ENCODE measurements at regions of chr16 and their contacts with region 1.

Region 1: GRCh38 chr16:46830902-46831647 is at the start of gene C16orf87:
- DNase-seq: peak; percentile 96
- H3K4me3 ChIP-seq: peak within 1 kb of the TSS; percentile 76 to 93 (median 79)
- H3K27ac ChIP-seq: peak within 1 kb of the TSS; percentile 90 to 95 (median 94)
- H3K4me1 ChIP-seq: peaks cover 0 to 20% (median 14%) of the 10 kb centered on the region in 4 donors
- H3K27me3 ChIP-seq: no peaks in the 10 kb centered on the region
- CTCF ChIP-seq: no peak
- EP300 ChIP-seq: no peak
- POLR2A ChIP-seq: no peak
- total RNA-seq, gene C16orf87: 5.0 to 10.5 (median 8.7) TPM

Region 2: GRCh38 chr16:46466226-46466625 is 364.8 kb before region 1 on chr16:
- intact Hi-C with region 1: no loop called
- DNase-seq: no peak
- H3K4me3 ChIP-seq: no peak overlapping the region
- H3K27ac ChIP-seq: no peak overlapping the region
- H3K4me1 ChIP-seq: no peaks in the 10 kb centered on the region
- H3K27me3 ChIP-seq: no peaks in the 10 kb centered on the region
- CTCF ChIP-seq: no peak
- EP300 ChIP-seq: no peak
- POLR2A ChIP-seq: no peak

Region 3: GRCh38 chr16:46649928-46650623 is 181.0 kb before region 1 on chr16:
- intact Hi-C with region 1: no loop called
- DNase-seq: peak; percentile 81
- H3K4me3 ChIP-seq: peak overlapping the region in 3 of 4 donors; percentile 14 to 28 (median 21)
- H3K27ac ChIP-seq: peak overlapping the region; percentile 62 to 73 (median 68)
- H3K4me1 ChIP-seq: no peaks in the 10 kb centered on the region
- H3K27me3 ChIP-seq: no peaks in the 10 kb centered on the region
- CTCF ChIP-seq: no peak
- EP300 ChIP-seq: no peak
- POLR2A ChIP-seq: no peak

Region 4: GRCh38 chr16:46689365-46690280 is 141.5 kb before region 1 on chr16 and contains the start of gene ORC6:
- intact Hi-C with region 1: loop called (anchors 2 kb)
- DNase-seq: peak; percentile 99
- H3K4me3 ChIP-seq: peak within 1 kb of the TSS; percentile 85 to 97 (median 92)
- H3K27ac ChIP-seq: peak within 1 kb of the TSS; percentile 89 to 94 (median 94)
- H3K4me1 ChIP-seq: peaks cover 0 to 40% (median 35%) of the 10 kb centered on the region in 4 donors
- H3K27me3 ChIP-seq: no peaks in the 10 kb centered on the region
- CTCF ChIP-seq: no peak
- EP300 ChIP-seq: no peak
- POLR2A ChIP-seq: no peak
- total RNA-seq, gene ORC6: 0.33 to 2.5 (median 0.83) TPM

Region 5: GRCh38 chr16:46883690-46884512 is 52.8 kb after region 1 on chr16 and contains the start of gene GPT2:
- intact Hi-C with region 1: loop called (anchors 2 kb)
- DNase-seq: peak; percentile 97
- H3K4me3 ChIP-seq: peak within 1 kb of the TSS; percentile 54 to 87 (median 72)
- H3K27ac ChIP-seq: peak within 1 kb of the TSS; percentile 68 to 75 (median 70)
- H3K4me1 ChIP-seq: peaks cover 0 to 19% (median 15%) of the 10 kb centered on the region in 4 donors
- H3K27me3 ChIP-seq: peaks cover 0 to 12% (median 0%) of the 10 kb centered on the region in 3 donors
- CTCF ChIP-seq: no peak
- EP300 ChIP-seq: no peak
- POLR2A ChIP-seq: peak in 1 of 2 donors; percentile 14
- total RNA-seq, gene GPT2: 3.3 to 17.1 (median 10.7) TPM

Region 6: DNA sequence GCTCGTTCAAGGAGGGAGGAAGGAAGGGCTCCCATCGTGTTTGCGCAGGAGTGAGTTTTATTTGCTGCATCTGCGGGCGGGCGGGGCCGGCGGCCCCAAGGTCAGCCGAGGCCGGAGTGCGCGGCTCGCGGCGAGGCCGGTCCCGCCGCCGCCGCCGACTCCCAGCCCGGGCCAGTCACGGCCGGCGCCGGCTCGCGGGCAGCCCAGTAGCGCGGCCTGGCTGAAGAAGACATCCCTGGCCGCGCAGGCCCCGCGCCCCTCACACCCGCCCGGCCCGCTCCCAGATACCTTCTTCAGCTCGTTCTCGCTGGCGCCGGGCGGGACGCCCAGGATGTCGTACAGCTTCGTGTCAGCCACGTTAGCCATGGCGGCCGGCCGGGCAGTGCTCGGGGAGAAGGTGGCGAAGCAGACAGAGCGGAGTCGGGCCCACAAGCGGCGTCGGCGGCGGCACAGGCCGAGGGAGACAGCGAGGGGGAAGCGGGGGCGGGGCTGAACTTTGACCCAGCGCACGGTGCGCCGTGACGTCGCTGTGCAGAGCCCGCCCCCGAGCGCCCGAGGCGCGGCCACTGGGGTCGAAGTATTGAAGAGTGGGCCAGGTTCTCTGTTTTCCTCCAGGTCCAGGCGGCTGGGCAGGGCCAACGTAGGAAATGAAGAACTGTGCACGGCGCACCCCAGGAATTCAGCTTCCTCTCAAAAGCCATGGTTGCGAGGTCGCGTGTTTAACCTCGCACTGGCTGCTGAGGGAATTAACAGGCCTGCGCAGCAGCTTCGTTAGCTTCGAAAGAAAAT is 142.3 kb after region 1 on chr16 and contains the start of gene DNAJA2:
- intact Hi-C with region 1: loop called (anchors 2 kb)
- DNase-seq: peak; percentile 96
- H3K4me3 ChIP-seq: peak within 1 kb of the TSS; percentile 80 to 95 (median 90)
- H3K27ac ChIP-seq: peak within 1 kb of the TSS; percentile 95 to 99 (median 97)
- H3K4me1 ChIP-seq: peaks cover 0 to 40% (median 32%) of the 10 kb centered on the region in 4 donors
- H3K27me3 ChIP-seq: no peaks in the 10 kb centered on the region
- CTCF ChIP-seq: no peak
- EP300 ChIP-seq: peak in 1 of 4 donors; percentile 26
- POLR2A ChIP-seq: peak; percentile 85 to 86
- total RNA-seq, gene DNAJA2: 59.0 to 68.7 (median 60.7) TPM